Psoas muscle (tissue), 8 donors: ENCODE measurements at regions of chr21 and their contacts with region 1.

Region 1: GRCh38 chr21:43866260-43866629 is 1.2 kb downstream of the AGPAT3 start:
- DNase-seq: peak; percentile 56 to 72
- ATAC-seq: peak; percentile 49 to 75 (median 66)
- H3K4me3 ChIP-seq: peak overlapping the region; percentile 90
- H3K27ac ChIP-seq: peak overlapping the region; percentile 90
- H3K4me1 ChIP-seq: peaks cover 43% of the 10 kb centered on the region
- H3K27me3 ChIP-seq: no peaks in the 10 kb centered on the region
- CTCF ChIP-seq: no peak

Region 2: DNA sequence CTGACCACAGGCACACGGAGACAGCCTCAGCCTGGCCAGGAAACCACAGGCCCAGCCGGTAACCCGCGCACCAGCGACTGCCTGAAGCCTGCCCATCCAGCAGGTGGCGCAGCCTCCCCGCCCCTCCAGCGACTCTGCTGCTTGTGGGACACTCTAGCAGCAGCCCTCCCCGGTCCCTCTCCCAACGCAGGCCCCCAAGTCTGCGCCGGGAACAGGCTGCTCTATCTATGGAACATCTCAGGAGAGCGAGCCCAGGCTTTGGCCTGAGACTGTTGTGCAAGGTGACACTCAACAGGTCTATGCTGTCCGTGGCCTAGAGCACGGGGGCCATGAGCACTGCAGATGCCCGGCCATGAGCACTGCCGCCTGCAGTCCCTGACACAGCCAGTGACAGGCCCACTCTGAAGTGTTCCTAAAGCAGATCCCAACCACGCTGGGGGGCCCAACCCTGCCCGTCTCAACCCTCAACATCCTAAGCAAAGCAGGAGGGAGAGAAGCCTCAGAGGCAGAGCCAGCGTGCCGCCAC is 1015.3 kb before region 1 on chr21:
- intact Hi-C with region 1: no loop called
- DNase-seq: no peak
- ATAC-seq: peak; percentile 15 to 58 (median 54)
- H3K4me3 ChIP-seq: no peak overlapping the region
- H3K27ac ChIP-seq: no peak overlapping the region
- H3K4me1 ChIP-seq: no peaks in the 10 kb centered on the region
- H3K27me3 ChIP-seq: no peaks in the 10 kb centered on the region
- CTCF ChIP-seq: peak; percentile 23

Region 3: GRCh38 chr21:43369124-43369523 is 497.1 kb before region 1 on chr21:
- intact Hi-C with region 1: no loop called
- DNase-seq: peak; percentile 54 to 59
- ATAC-seq: peak; percentile 63 to 67 (median 64)
- H3K4me3 ChIP-seq: no peak overlapping the region
- H3K27ac ChIP-seq: no peak overlapping the region
- H3K4me1 ChIP-seq: no peaks in the 10 kb centered on the region
- H3K27me3 ChIP-seq: peaks cover 0 to 7% (median 0%) of the 10 kb centered on the region in 3 donors
- CTCF ChIP-seq: no peak

Region 4: DNA sequence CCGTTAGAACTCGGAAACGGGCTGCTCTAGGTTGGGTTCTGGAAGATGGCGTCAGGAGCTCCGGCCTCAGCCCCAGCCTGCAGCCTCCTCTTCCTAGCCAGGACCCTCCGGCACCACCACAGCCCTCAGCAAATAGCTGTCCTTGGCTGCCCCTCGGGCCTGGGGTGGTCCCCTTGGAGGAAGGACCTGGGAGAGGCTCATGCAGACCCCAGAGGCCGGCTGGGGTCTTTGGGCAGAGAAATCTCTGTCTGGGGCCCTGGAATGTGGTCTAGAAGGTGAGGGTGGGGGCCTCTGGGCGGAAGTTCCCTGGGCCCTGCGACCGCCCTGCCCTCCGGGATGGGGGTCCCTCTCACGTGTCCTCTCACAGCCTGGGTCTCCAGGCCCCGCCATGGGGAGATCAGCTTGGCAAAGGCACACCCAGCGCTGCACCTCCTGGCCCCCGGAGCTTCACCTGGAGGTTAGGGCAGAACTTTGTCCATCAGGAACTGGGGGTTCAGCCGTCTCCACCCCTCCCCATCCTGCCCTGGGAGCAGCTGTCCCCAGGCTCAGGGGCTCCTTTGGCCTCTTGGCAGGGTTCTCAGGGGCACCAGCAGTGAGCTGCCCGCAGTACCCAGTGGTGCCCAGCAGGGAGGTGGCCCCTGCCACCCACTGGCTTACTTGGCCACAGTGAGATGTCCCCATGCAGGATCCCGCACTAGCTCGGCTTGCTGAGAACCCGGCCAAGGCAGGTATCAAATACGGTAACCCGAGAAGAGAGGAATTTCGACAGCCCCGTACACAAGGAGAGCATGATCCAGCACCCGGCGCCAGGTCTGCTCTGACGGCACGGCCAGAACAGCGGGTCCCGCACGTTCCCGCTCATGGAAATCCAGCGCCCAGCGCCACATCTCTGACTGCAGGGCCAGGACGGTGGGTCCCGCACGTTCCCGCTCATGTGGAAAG is 40.3 kb before region 1 on chr21:
- intact Hi-C with region 1: loop called in 1 of 2 experiments (anchors 5 kb)
- DNase-seq: peak; percentile 66 to 88
- ATAC-seq: peak; percentile 88 to 89 (median 88)
- H3K4me3 ChIP-seq: peak overlapping the region; percentile 4
- H3K27ac ChIP-seq: peak overlapping the region; percentile 67
- H3K4me1 ChIP-seq: peaks cover 18% of the 10 kb centered on the region
- H3K27me3 ChIP-seq: peaks cover 0 to 3% (median 0%) of the 10 kb centered on the region in 3 donors
- CTCF ChIP-seq: peak; percentile 26

Region 5: GRCh38 chr21:43902441-43902840 is 36.2 kb after region 1 on chr21:
- intact Hi-C with region 1: loop called (anchors 5 kb)
- DNase-seq: no peak
- ATAC-seq: peak; percentile 39 to 69 (median 60)
- H3K4me3 ChIP-seq: no peak overlapping the region
- H3K27ac ChIP-seq: peak overlapping the region; percentile 89
- H3K4me1 ChIP-seq: peaks cover 26% of the 10 kb centered on the region
- H3K27me3 ChIP-seq: no peaks in the 10 kb centered on the region
- CTCF ChIP-seq: no peak

Region 6: DNA sequence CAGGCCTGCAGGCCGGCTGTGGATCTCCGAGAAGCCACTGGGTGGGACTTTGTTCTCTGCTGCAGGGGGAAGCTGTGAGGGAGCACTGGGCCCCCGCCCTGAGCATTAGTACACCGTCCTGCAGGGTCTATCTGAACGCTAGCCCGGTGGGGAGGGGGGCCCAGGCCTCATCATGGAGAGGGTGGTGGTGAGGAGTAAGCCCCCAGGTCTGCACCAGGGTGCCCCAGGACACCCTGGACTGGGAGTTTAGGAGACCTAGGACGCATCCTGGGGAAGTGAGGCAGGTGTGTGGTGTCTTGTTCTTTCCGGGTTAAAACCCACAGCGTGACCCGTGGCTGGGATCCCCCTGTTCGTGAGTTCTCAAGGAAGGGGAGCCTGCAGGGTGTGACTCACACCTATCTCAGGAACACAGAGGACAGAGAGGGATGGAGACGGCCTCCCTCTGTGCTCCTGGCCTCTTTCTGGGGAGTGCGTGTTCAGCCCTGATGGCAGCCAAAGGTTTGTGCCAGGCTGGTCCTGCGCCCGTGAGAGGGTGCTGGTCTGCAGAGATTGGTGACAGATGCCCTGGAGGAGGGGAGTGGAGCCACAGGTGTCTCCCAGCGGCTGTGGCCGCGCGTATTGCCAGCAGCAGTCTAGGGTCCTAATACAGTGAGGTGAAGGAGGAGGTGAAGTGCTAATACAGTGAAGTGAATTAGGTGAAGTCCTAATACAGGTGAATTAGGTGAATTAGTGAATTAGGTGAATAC is 43.7 kb after region 1 on chr21:
- intact Hi-C with region 1: loop called in 1 of 2 experiments (anchors 5 kb)
- DNase-seq: no peak
- ATAC-seq: no peak
- H3K4me3 ChIP-seq: no peak overlapping the region
- H3K27ac ChIP-seq: no peak overlapping the region
- H3K4me1 ChIP-seq: peaks cover 44% of the 10 kb centered on the region
- H3K27me3 ChIP-seq: no peaks in the 10 kb centered on the region
- CTCF ChIP-seq: no peak

Region 7: GRCh38 chr21:43921979-43922945 is 56.0 kb after region 1 on chr21:
- intact Hi-C with region 1: no loop called
- DNase-seq: peak in 1 of 2 donors; percentile 56
- ATAC-seq: no peak
- H3K4me3 ChIP-seq: no peak overlapping the region
- H3K27ac ChIP-seq: peak overlapping the region; percentile 67
- H3K4me1 ChIP-seq: peaks cover 78% of the 10 kb centered on the region
- H3K27me3 ChIP-seq: no peaks in the 10 kb centered on the region
- CTCF ChIP-seq: no peak

Region 8: DNA sequence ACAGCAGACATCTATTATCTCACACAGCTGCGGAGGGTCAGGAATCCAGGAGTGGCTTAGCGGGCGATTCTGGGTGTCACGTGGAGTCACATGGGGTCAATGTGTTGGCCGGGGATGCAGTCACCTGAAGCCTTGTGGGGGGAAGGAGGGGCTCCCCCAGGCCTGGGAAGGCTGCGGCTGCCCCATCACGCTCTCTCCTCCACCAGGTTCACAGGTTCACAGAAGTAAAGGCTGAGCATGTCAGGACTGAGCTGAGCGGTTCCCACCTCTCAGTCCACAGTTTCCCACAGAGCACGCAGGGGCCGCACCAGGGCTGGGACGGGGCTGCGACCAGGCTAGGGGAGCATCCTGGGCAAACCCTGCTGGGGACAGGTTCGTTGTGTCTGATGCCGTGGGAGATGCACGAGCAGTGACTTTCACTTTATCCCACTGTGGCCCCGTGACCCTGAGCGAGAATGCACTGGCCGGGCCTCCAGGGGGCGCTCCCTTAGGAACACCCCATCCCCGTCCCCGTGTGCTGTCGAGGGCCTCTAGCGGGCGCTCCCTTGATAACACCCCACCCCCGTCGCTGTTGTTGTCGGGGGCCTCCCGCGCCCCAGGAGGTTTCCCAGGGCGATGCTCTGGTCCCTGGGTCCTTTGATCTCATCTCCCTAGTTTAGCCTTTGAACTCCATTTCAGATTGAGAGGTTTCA is 72.7 kb after region 1 on chr21:
- intact Hi-C with region 1: loop called in 1 of 2 experiments (anchors 5 kb)
- DNase-seq: peak; percentile 84 to 86
- ATAC-seq: peak; percentile 70 to 86 (median 82)
- H3K4me3 ChIP-seq: peak overlapping the region; percentile 58
- H3K27ac ChIP-seq: peak overlapping the region; percentile 71
- H3K4me1 ChIP-seq: peaks cover 39% of the 10 kb centered on the region
- H3K27me3 ChIP-seq: no peaks in the 10 kb centered on the region
- CTCF ChIP-seq: peak; percentile 80

Region 9: DNA sequence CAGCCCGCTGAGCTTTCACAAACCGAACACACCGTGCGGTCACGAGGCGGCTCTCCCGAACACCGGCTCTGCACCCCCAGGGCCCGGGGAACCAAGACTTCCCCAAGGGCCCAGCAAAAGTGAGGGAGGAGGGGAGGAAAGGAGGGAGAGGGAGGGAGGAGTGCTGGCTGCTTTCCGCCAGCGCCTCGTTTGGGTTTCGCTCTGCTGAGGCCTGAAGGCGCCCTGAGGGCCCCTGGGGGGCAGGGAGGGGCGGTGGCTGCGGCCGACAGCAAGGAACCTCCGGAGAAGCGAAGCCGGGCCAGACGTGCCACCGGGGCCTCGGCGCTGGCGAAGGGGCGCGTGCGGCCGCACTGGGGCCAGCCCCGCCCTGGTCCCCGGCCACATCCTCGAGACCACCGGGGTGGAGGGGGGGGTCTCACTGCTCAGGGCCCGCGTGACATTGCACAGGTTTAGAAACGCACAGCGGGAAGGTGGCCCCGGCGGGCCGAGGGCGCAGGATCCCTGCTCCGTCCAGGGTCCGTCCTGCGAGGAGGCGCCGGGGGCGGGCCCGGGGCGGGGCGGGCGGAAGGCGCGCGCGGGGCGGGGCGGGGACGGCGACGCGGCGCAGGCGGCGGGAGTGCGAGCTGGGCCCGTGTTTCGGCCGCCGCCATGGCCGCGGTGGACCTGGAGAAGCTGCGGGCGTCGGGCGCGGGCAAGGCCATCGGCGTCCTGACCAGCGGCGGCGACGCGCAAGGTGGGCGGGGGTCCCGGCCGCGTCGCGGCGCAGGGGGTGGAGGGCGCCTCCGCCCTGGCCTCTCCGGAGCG is 433.4 kb after region 1 on chr21 and contains the start of gene PFKL:
- intact Hi-C with region 1: no loop called
- DNase-seq: peak; percentile 71 to 79
- ATAC-seq: peak; percentile 35 to 67 (median 56)
- H3K4me3 ChIP-seq: peak within 1 kb of the TSS; percentile 76
- H3K27ac ChIP-seq: peak within 1 kb of the TSS; percentile 76
- H3K4me1 ChIP-seq: peaks cover 32% of the 10 kb centered on the region
- H3K27me3 ChIP-seq: peaks cover 0 to 13% (median 4%) of the 10 kb centered on the region in 3 donors
- CTCF ChIP-seq: no peak
- total RNA-seq, gene PFKL: 17.8 to 33.6 (median 27.7) TPM